ENCODE measurements at regions of chr2 and their contacts with region 1.

Region 1: GRCh38 chr2:168920504-168921157 is 19.5 kb downstream of the G6PC2 start:
- DNase-seq: no peak
- H3K4me3 ChIP-seq: no peak overlapping the region
- H3K27me3 ChIP-seq: 0 out of 2 replicates have a peak, but pooled peaks cover 4% of the 10 kb centered on the region
- CTCF ChIP-seq: peak; percentile 47

Region 2: GRCh38 chr2:168545439-168546082 is 375.1 kb before region 1 on chr2:
- CTCF ChIA-PET with region 1: no interaction called
- POLR2A ChIA-PET with region 1: interaction called, 15 read pairs
- DNase-seq: no peak
- H3K4me3 ChIP-seq: no peak overlapping the region
- H3K27me3 ChIP-seq: no peaks in the 10 kb centered on the region
- CTCF ChIP-seq: no peak

Region 3: DNA sequence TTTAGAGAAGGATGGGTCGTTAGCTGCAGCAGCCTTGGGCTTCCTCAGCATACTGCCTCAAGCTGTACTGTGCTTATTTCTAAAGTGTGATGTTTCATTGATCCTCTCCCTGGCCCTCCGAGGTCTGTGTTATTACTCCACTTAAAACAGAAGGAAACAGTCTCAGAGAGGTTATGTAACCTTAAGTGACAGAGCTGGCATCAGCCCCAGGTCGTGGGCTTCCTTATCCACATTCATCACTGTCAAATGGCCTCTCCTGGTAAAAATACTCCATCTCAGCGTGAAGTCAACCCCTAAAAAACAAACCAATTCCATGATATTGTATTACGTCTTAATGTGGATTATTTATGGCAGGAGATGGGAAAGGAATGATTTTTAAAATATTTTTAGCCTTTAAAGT is 271.5 kb before region 1 on chr2:
- CTCF ChIA-PET with region 1: no interaction called
- POLR2A ChIA-PET with region 1: no interaction called
- DNase-seq: no peak
- H3K4me3 ChIP-seq: no peak overlapping the region
- H3K27me3 ChIP-seq: no peaks in the 10 kb centered on the region
- CTCF ChIP-seq: no peak

Region 4: DNA sequence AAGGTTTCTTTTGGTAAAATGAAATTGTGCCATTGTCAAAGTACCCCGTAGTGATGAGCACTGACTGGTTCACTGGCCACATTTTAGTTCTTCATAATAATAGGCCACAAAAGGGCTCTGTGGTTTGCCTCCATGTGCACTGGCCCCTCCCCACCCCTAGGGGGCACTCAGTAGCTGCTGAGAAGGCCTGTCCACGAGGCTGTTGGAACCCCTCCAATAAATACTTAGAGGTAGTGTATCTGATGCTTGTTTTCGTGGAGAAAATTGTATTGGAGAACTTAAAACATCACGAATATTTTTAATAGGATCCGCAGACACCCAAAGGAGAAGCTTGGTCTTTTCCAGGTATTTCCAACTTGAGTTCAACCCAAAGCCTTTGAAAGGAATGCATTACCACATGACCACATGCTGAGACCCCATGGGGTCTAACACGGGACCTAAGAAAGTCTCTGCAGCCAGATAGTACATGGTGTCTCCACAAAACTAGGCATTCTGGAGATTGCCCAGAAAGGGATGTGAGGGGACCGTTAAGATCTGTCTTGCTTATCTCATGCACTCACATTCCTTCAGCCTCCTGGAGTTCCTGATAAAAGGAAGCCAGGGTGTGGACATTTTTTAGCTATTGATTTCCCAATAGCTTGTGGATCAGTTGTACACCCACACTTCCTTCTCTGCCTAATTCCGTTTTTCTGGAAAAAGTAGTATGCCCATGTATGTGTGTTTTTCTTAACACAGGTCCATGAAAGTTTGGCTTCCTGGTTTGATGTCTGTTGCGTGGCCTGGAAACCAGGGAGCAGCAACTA is 146.7 kb before region 1 on chr2:
- CTCF ChIA-PET with region 1: interaction called, 31 read pairs
- POLR2A ChIA-PET with region 1: no interaction called
- DNase-seq: no peak
- H3K4me3 ChIP-seq: no peak overlapping the region
- H3K27me3 ChIP-seq: no peaks in the 10 kb centered on the region
- CTCF ChIP-seq: peak; percentile 93

Region 5: GRCh38 chr2:168910330-168910729 is 10.3 kb before region 1 on chr2:
- CTCF ChIA-PET with region 1: interaction called, 11 read pairs
- POLR2A ChIA-PET with region 1: no interaction called
- DNase-seq: no peak
- H3K4me3 ChIP-seq: no peak overlapping the region
- H3K27me3 ChIP-seq: peaks cover 14% of the 10 kb centered on the region
- CTCF ChIP-seq: no peak

Region 6: DNA sequence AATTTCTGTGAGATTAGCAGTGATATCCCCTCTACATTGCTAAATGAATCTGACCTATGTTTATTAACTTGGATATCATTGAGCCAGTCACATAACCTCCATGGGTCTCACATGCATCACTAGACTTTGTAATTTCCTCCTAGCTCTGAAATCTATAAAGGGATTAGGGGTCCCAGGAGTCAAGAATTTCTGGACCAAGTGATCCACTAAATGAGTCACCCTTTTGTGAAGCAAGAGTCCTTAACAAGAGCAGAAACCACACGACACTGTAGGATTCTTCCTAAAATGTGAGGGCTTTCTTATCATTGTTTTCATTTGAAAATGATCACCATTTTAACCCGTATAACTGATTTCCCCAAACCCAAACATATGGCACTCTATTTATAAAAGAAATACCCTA is 239.1 kb after region 1 on chr2:
- CTCF ChIA-PET with region 1: no interaction called
- POLR2A ChIA-PET with region 1: no interaction called
- DNase-seq: no peak
- H3K4me3 ChIP-seq: no peak overlapping the region
- H3K27me3 ChIP-seq: no peaks in the 10 kb centered on the region
- CTCF ChIP-seq: no peak